ENCODE measurements at regions of chr14 and their contacts with region 1.

Region 1: GRCh38 chr14:34699873-34700621 is 14.3 kb downstream of the CFL2 start:
- H3K4me3 ChIP-seq: no peak overlapping the region
- H3K27ac ChIP-seq: peak overlapping the region; percentile 69
- H3K4me1 ChIP-seq: peaks cover 12% of the 10 kb centered on the region
- CTCF ChIP-seq: no peak

Region 2: DNA sequence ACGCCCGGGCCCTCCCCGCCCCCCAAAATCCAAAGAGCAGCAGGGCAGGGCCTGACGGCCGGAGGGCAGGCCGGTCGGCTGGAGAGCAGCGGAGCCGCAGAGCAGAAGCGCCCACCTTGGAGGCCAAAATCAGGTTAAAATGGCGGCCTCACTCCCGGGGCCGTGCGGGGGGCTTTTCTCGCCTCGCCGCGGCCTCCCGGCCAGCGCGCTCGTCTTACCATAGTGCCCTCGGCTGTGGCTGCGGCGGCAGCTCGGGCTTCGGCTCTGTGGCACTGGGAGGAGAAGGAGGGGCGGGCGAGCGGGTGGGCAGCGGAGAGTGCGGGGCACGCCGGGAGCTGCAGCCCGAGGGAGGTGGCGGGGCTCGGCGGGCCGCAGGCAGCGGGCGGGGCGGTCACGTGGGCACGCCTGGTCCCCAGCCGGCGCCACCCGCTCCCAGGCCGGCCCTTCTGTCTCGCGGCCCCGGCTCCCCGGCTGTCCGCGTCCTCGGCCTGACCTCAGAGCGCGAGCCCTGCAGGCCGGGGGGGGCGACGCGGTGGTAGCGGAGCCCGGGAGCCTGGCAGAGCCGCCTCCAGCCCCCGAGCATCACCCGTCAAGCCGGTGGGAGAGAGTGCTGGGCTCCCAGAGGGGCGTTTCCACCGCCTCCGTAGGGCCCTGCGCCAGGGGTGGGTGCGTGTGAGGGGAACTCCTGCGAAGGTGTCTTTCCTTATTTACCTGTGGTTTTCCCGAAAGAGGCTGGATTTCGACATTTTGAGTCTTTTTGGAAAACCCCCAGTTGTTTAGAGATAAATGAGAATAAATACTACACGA is 14.5 kb after region 1 on chr14 and contains the start of gene CFL2:
- CTCF ChIA-PET with region 1: interaction called, 5 read pairs
- POLR2A ChIA-PET with region 1: interaction called, 17 read pairs
- H3K4me3 ChIP-seq: peak within 1 kb of the TSS; percentile 81
- H3K27ac ChIP-seq: peak within 1 kb of the TSS; percentile 82
- H3K4me1 ChIP-seq: peaks cover 24% of the 10 kb centered on the region
- CTCF ChIP-seq: no peak

Measured in HEK293 (cell line).